Activated T-helper 1 cell treated with anti-CD3 and anti-CD28 coated beads, Interleukin-12 subunit alpha, Interleukin-12 subunit beta, Interleukin-2, Interleukin-4 antibody, amounts not matched to agents 30 ng/mL and 10 ng/mL and 1 ng/mL, durations not matched to agents 14 hours and 24 hours and 36 hours (primary cell): ENCODE measurements at regions of chr1 and their contacts with region 1.

Region 1: GRCh38 chr1:193406901-193407300 is 220.5 kb upstream of the B3GALT2 start:
- DNase-seq: no peak
- H3K4me3 Mint-ChIP-seq: no peak overlapping the region
- H3K27ac Mint-ChIP-seq: no peak overlapping the region
- H3K4me1 Mint-ChIP-seq: peaks cover 28% of the 10 kb centered on the region
- H3K27me3 Mint-ChIP-seq: no peaks in the 10 kb centered on the region

Region 2: DNA sequence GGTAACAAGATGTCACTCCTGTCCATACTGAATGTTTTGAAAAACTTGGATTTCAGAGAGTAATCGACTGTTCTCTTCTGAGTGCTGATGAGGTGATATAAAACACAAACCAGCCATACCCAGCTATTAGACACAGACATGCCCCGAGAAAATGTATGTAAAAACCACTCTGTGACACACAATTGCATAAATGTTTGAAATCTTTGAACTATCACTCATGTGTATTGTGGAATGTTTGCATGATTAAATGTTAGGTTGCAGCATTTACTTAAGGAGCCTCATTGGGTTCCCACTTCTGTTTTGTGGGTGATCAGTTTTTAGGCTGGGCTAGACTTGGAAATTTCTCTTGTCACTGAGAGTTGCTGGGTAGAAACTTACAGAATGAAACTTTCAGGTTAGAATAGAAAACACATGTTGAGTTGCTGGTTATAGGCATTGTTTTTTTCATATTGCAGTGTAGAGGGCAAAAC is 49.9 kb after region 1 on chr1:
- intact Hi-C with region 1: loop called (anchors 2 kb)
- DNase-seq: no peak
- H3K4me3 Mint-ChIP-seq: no peak overlapping the region
- H3K27ac Mint-ChIP-seq: no peak overlapping the region
- H3K4me1 Mint-ChIP-seq: peaks cover 25% of the 10 kb centered on the region
- H3K27me3 Mint-ChIP-seq: no peaks in the 10 kb centered on the region

Region 3: DNA sequence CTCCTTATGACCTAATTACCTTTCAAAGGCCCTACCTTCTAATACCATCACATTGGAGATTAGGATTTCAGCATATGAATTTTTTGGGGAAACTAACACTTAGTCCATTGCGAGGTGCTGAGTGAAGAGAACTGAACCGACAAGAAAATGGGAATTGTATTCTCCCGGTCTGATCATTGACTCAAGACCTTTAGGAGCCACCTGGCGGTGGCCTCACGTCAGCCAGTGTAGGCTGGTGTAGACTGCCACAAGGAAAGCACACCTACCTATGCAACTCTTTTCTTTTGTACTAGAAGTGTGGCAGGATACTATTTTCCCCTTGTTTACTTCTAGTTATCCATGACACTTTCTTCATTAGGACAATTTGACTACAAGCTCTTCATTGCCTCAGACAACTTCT is 113.0 kb after region 1 on chr1:
- intact Hi-C with region 1: no loop called
- DNase-seq: no peak
- H3K4me3 Mint-ChIP-seq: no peak overlapping the region
- H3K27ac Mint-ChIP-seq: no peak overlapping the region
- H3K4me1 Mint-ChIP-seq: no peaks in the 10 kb centered on the region
- H3K27me3 Mint-ChIP-seq: peaks cover 3% of the 10 kb centered on the region

Region 4: GRCh38 chr1:193569096-193569982 is 162.4 kb after region 1 on chr1:
- intact Hi-C with region 1: loop called (anchors 2 kb)
- DNase-seq: peak; percentile 26
- H3K4me3 Mint-ChIP-seq: peak overlapping the region; percentile 25
- H3K27ac Mint-ChIP-seq: peak overlapping the region; percentile 81
- H3K4me1 Mint-ChIP-seq: peaks cover 36% of the 10 kb centered on the region
- H3K27me3 Mint-ChIP-seq: no peaks in the 10 kb centered on the region

Region 5: GRCh38 chr1:193799948-193800690 is 393.2 kb after region 1 on chr1:
- intact Hi-C with region 1: loop called (anchors 5 kb)
- DNase-seq: no peak
- H3K4me3 Mint-ChIP-seq: no peak overlapping the region
- H3K27ac Mint-ChIP-seq: no peak overlapping the region
- H3K4me1 Mint-ChIP-seq: no peaks in the 10 kb centered on the region
- H3K27me3 Mint-ChIP-seq: no peaks in the 10 kb centered on the region

Region 6: DNA sequence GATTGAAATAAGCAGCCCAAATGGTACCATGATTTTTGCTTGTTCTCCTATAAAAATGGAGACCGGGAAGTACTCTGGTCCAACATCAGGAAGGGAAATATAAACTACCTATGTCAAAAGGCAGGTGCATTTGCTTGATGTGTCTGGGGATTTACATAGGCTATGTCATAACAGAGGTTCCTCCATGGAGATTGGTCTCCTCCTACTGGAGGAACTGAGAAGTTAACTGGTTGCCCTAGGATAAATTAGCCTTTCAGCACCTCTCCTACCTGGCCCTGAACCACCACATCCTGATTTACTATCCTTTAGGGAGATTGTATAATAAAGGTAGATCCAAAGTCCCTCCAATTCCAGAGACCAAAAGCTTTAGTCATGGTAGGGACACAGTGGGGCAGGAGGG is 888.8 kb after region 1 on chr1:
- intact Hi-C with region 1: loop called (anchors 2 kb)
- DNase-seq: peak; percentile 12
- H3K4me3 Mint-ChIP-seq: no peak overlapping the region
- H3K27ac Mint-ChIP-seq: no peak overlapping the region
- H3K4me1 Mint-ChIP-seq: peaks cover 18% of the 10 kb centered on the region
- H3K27me3 Mint-ChIP-seq: no peaks in the 10 kb centered on the region